Panc1 (cell line): ENCODE measurements at regions of chr4 and their contacts with region 1.

Region 1: GRCh38 chr4:140176735-140177134 is 22.8 kb upstream of the MAML3 start:
- DNase-seq: no peak
- ATAC-seq: no peak
- H3K4me3 ChIP-seq: no peak overlapping the region
- H3K27ac ChIP-seq: no peak overlapping the region
- H3K4me1 ChIP-seq: no peaks in the 10 kb centered on the region
- H3K27me3 ChIP-seq: no peaks in the 10 kb centered on the region
- CTCF ChIP-seq: no peak

Region 2: GRCh38 chr4:140266991-140267426 is 90.3 kb after region 1 on chr4:
- CTCF ChIA-PET with region 1: no interaction called
- POLR2A ChIA-PET with region 1: interaction called, 11 read pairs
- in situ Hi-C with region 1: no loop called
- intact Hi-C with region 1: no loop called
- DNase-seq: no peak
- ATAC-seq: no peak
- H3K4me3 ChIP-seq: no peak overlapping the region
- H3K27ac ChIP-seq: no peak overlapping the region
- H3K4me1 ChIP-seq: no peaks in the 10 kb centered on the region
- H3K27me3 ChIP-seq: no peaks in the 10 kb centered on the region
- CTCF ChIP-seq: no peak

Region 3: DNA sequence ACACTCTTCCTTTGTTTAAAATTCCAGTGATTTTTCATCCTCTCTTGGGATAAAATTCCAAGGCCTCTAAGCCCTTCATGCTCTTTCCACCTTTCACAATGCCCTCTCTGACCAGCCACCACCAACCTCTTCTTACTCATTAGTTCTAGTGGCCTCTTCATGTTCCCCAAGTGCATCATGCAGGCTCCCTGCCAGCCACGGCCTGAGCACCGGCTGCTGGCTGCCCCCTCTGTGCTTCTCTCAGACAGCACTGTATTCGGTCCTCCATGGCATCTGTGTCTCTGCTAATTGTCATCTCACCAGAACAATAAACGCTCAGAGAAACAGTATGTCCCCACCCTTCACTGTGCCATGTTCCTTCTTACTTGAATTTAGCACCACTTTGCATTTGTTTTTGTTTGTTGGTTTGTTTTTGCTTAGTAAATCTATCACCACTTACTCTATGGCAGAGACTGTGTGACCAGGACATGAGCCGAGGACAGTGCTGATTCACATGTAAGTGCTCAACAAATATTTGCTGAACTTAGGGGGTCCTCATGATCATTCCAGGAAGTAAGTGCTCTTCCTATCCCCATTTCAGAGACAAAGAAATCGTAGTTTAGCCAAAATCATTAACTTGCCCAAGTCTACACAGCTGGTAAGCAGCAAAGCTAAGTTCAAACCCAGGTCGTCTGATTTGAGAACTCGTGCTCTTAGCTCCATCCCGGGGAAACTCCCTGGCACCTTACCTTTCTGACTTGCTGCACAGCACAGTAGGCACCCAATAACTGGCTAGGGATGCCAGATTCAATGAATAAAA is 469.1 kb after region 1 on chr4:
- CTCF ChIA-PET with region 1: no interaction called
- POLR2A ChIA-PET with region 1: no interaction called
- in situ Hi-C with region 1: no loop called
- intact Hi-C with region 1: no loop called
- DNase-seq: no peak
- ATAC-seq: no peak
- H3K4me3 ChIP-seq: no peak overlapping the region
- H3K27ac ChIP-seq: no peak overlapping the region
- H3K4me1 ChIP-seq: no peaks in the 10 kb centered on the region
- H3K27me3 ChIP-seq: no peaks in the 10 kb centered on the region
- CTCF ChIP-seq: no peak